Heart right ventricle (tissue), 16 donors: ENCODE measurements at regions of chr16 and their contacts with region 1.

Region 1: DNA sequence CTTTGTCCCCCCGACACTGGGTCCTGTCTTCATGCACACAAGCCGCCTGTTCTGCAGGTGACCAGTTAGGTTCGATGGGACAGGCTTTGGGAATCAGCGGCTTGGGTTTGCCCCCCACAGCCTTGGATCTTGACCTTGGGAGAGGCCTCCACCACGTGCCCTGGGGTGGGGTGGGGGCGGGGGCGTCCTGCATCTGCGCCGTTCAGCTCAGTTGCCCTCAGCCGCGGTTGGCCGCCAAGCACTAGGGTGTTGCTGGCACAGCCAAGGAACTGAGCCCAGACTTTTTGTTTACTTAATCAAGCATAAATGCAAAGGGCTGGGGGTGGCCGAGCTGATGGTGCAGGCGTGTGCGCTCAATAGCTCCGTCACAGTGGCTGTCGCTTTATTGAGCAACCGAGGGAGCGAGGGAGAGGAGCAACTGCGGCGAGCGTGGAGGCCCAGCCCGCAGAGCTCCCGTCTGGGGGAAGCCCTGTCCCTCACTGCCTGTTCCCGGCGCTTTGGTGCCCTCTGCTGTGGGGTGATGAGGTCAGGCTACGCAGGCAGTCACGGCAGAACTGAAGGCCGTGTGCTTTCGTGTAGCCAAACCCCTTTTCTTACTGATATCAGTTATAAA is 33.9 kb downstream of the JPH3 start:
- DNase-seq: peak; percentile 80 to 83
- ATAC-seq: peak; percentile 91 to 97 (median 95)
- H3K4me3 ChIP-seq: peak overlapping the region in 5 of 10 donors; percentile 18 to 34 (median 30)
- H3K27ac ChIP-seq: no peak overlapping the region
- H3K4me1 ChIP-seq: peaks cover 0 to 16% (median 11%) of the 10 kb centered on the region in 9 donors
- H3K27me3 ChIP-seq: peaks cover 0 to 53% (median 12%) of the 10 kb centered on the region in 7 donors
- CTCF ChIP-seq: peak; percentile 47 to 78 (median 70)

Region 2: GRCh38 chr16:87316923-87317749 is 319.0 kb before region 1 on chr16 and contains the start of gene C16orf95:
- intact Hi-C with region 1: loop called in 5 of 10 experiments (anchors 5 to 10 kb)
- DNase-seq: peak; percentile 95 to 97
- ATAC-seq: peak; percentile 97 to 99 (median 99)
- H3K4me3 ChIP-seq: peak within 1 kb of the TSS; percentile 71 to 99 (median 86)
- H3K27ac ChIP-seq: peak within 1 kb of the TSS; percentile 74 to 98 (median 92)
- H3K4me1 ChIP-seq: peaks cover 0 to 12% (median 9%) of the 10 kb centered on the region in 9 donors
- H3K27me3 ChIP-seq: no peaks in the 10 kb centered on the region
- CTCF ChIP-seq: peak; percentile 41 to 78 (median 66)
- total RNA-seq, gene C16orf95: 2.8 to 5.1 (median 3.8) TPM

Region 3: GRCh38 chr16:87407511-87408112 is 228.6 kb before region 1 on chr16:
- intact Hi-C with region 1: loop called in 2 of 10 experiments (anchors 5 to 10 kb)
- DNase-seq: peak in 1 of 2 donors; percentile 51
- ATAC-seq: peak; percentile 10 to 82 (median 52)
- H3K4me3 ChIP-seq: no peak overlapping the region
- H3K27ac ChIP-seq: peak overlapping the region in 3 of 10 donors; percentile 8 to 10 (median 9)
- H3K4me1 ChIP-seq: peaks cover 0 to 20% (median 0%) of the 10 kb centered on the region in 9 donors
- H3K27me3 ChIP-seq: no peaks in the 10 kb centered on the region
- CTCF ChIP-seq: no peak

Region 4: DNA sequence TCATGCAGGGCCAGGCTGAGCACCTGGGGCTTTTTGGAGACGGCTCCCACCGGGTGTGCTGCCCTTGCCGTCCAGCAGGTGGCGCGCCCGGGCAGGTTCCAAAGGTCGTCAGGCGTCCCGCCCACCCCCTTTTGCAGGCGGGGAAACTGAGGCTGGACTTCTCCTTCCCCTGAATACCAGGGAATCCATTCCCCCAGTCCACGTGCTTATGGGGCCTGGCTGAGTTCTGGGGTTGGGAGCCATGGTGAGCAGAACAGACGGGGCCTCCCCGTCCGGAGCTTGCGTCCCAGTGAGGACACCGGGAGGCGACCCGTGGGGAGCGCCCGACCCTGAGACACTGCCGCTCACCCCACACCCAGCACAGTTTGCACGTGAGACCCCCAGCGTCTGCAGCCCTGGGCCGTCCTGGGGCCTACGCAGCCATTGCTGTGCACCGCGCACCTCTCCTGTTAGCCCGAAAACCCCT is 85.6 kb before region 1 on chr16:
- intact Hi-C with region 1: loop called in 3 of 10 experiments (anchors 2 to 5 kb)
- DNase-seq: peak in 1 of 2 donors; percentile 57
- ATAC-seq: peak in 7 of 8 donors; percentile 37 to 57 (median 46)
- H3K4me3 ChIP-seq: no peak overlapping the region
- H3K27ac ChIP-seq: no peak overlapping the region
- H3K4me1 ChIP-seq: peaks cover 0 to 7% (median 0%) of the 10 kb centered on the region in 9 donors
- H3K27me3 ChIP-seq: peaks cover 0 to 22% (median 5%) of the 10 kb centered on the region in 7 donors
- CTCF ChIP-seq: peak; percentile 85 to 96 (median 92)

Region 5: DNA sequence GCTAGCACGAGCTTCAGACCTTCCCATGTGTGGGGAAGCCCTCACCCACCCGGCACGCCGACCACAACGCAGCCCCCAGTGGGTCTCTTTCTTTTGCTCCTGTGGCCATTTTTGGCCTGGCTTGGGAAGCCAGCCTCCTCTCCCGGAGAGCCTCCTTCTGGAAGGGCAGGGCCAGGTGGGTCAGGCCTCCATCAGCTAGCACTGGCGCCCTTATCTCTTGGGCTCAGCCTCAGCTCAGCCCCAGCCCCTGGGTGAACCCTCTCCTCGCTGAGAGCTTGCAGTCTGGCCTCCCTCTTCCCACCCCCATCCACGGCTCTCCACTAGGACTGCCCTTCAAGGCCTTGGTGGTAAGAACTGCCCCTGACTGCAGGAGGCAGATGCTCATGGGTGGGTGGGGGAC is 48.5 kb before region 1 on chr16:
- intact Hi-C with region 1: loop called in 7 of 10 experiments (anchors 1 to 5 kb)
- DNase-seq: no peak
- ATAC-seq: no peak
- H3K4me3 ChIP-seq: no peak overlapping the region
- H3K27ac ChIP-seq: no peak overlapping the region
- H3K4me1 ChIP-seq: peaks cover under 1 to 13% (median 8%) of the 10 kb centered on the region in 9 donors
- H3K27me3 ChIP-seq: peaks cover 0 to 68% (median 37%) of the 10 kb centered on the region in 7 donors
- CTCF ChIP-seq: no peak